ENCODE measurements at regions of chr17 and their contacts with region 1.

Region 1: GRCh38 chr17:8118769-8119580 is 661 bp upstream of the ALOXE3 start:
- DNase-seq: peak; percentile 67 to 87
- H3K4me3 ChIP-seq: peak overlapping the region; percentile 87
- H3K27ac ChIP-seq: peak overlapping the region; percentile 87
- H3K4me1 ChIP-seq: peaks cover 11% of the 10 kb centered on the region
- H3K27me3 ChIP-seq: no peaks in the 10 kb centered on the region
- CTCF ChIP-seq: peak; percentile 74

Region 2: DNA sequence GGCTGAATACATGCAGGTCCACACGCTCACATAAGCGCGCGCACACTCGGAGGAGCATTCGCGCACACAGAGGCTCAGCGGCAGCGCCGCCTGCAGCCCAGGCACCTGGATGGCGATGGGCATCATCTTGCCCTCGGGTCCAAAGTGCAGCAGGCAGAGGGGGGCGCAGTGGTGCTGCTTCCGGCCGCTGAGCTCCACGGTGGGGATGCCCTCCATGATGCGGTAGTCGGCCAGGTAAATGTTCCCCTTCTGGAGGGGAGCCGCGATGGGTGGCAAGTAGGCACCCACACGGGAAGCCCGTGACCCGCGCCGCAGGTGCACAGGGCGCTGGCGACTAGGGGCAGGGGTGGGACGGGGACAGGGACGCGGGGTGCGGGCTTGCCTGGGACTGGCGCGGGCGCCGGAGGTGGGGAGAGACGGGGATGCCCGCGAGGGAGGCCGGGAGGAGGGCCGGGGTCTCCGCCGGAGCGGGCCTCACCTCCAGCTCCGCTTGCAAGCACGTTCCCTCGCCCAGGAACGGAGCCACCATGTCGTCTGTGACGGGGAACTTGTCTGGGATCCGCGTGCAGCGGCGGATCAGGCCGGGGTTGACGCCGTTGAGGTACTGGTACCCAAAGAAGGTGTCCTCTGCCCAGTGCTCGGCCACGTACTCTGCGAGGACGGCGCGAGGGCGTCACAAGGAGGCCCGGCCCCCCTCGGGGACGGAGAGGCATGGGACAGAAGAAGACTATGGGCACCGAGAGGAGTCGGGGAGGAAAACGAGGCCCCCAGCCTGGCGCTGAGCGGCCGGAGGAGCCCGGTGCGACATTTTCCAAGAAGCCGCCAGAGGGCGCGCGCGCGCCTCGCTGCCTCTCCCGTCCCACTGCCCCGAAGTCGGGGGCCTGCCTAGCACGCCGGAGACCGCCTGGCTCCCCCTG is 39.4 kb before region 1 on chr17:
- CTCF ChIA-PET with region 1: no interaction called
- POLR2A ChIA-PET with region 1: no interaction called
- intact Hi-C with region 1: loop called (anchors 2 kb)
- DNase-seq: peak in 1 of 2 experiments; percentile 78
- H3K4me3 ChIP-seq: peak overlapping the region; percentile 54
- H3K27ac ChIP-seq: no peak overlapping the region
- H3K4me1 ChIP-seq: no peaks in the 10 kb centered on the region
- H3K27me3 ChIP-seq: peaks cover 6% of the 10 kb centered on the region
- CTCF ChIP-seq: peak; percentile 81

Region 3: DNA sequence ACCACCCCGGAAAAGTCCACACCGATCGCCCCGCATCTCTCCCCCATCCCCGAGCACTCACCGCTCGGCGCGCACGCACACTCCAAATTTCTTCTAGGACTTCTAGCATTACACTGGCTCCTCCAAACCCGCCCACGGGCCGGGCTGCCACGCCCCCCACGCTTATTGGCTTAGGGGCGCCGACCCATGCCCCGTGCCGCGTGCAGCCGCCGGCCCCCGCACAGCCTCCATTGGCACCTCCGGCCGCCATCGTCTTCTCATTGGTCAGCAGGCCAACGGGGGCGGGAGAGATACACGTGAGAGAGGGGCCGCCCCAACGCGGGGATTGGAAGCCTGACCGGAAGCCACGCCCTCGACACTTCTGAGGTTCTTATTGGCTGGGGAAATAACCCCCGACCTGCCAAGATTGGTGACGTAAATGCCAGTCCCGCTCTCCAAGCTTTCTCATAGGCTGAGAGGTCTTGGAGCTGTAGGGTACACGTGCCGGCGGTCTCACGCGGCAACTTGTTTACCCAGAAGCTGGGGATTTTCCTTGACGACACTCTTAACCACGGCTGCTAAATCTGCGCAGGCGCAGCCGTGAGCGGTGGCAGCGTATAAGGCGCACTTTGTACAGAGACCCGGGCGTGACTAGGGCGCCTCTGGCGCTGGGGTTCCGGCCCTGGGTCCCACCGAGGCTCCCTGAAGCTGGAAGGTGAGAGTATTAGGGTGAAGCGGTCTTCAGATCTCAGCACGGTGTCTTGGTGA is 37.4 kb after region 1 on chr17:
- CTCF ChIA-PET with region 1: interaction called, 3 read pairs
- POLR2A ChIA-PET with region 1: interaction called, 8 read pairs
- intact Hi-C with region 1: loop called (anchors 1 kb)
- DNase-seq: peak; percentile 99 to 100
- H3K4me3 ChIP-seq: peak overlapping the region; percentile 60
- H3K27ac ChIP-seq: peak overlapping the region; percentile 82
- H3K4me1 ChIP-seq: peaks cover 25% of the 10 kb centered on the region
- H3K27me3 ChIP-seq: no peaks in the 10 kb centered on the region
- CTCF ChIP-seq: no peak

Region 4: GRCh38 chr17:8248751-8249607 is 130.0 kb after region 1 on chr17 and contains the start of gene PFAS:
- CTCF ChIA-PET with region 1: no interaction called
- POLR2A ChIA-PET with region 1: no interaction called
- intact Hi-C with region 1: loop called (anchors 1 kb)
- DNase-seq: peak; percentile 83 to 96
- H3K4me3 ChIP-seq: peak within 1 kb of the TSS; percentile 99
- H3K27ac ChIP-seq: peak within 1 kb of the TSS; percentile 93
- H3K4me1 ChIP-seq: peaks cover 8% of the 10 kb centered on the region; the same call in 1 of the 2 replicates
- H3K27me3 ChIP-seq: no peaks in the 10 kb centered on the region
- CTCF ChIP-seq: no peak
- total RNA-seq, gene PFAS: 54.5 and 68.2 TPM in 2 replicates